ENCODE measurements at regions of chr7 and their contacts with region 1.

Region 1: DNA sequence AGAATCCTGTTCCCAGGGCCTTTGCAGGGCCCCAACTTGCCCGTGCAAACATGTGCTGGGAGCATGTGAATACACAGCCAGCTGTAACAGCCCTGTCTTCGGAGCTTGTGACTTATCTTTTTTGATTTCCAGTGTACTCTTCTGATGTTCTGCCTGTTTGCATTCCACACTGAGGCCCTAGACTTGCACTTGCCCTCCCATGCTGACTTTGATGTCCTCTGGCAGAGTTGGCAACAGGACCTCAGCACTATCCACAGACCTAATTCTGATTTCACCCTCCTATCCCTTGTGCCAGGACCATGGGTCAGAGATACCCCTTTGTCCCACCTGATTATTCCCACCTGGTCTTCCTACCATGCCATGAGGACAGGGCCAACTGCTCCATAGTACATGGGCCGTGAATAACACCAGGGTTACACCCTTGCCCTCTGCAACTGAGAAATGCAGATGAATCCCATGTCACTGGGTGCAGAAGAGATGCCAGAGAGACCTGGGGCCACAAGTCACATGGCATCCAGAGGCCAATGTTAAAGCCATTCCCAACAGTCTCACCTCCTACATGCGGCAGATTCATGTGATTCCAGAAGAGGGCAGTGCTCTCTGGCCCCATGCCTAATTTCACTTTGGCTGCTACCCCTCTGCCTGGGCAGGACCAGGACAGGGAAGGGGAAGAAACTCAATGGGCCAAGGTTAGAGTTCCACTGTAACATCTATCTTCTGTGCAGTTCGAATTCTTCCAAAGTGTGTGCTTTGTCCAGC is 43.0 kb downstream of the SCRN1 start:
- DNase-seq: peak; percentile 44 to 79 (median 76)
- ATAC-seq: peak; percentile 38 to 56
- H3K4me3 ChIP-seq: no peak overlapping the region
- H3K27ac ChIP-seq: no peak overlapping the region
- H3K4me1 ChIP-seq: no peaks in the 10 kb centered on the region
- H3K27me3 ChIP-seq: no peaks in the 10 kb centered on the region

Region 2: GRCh38 chr7:28732071-28732869 is 1214.3 kb before region 1 on chr7:
- intact Hi-C with region 1: no loop called
- DNase-seq: peak; percentile 22 to 72 (median 65)
- ATAC-seq: peak; percentile 70 to 85
- H3K4me3 ChIP-seq: no peak overlapping the region
- H3K27ac ChIP-seq: peak overlapping the region; percentile 37
- H3K4me1 ChIP-seq: peaks cover 6% of the 10 kb centered on the region
- H3K27me3 ChIP-seq: no peaks in the 10 kb centered on the region

Region 3: DNA sequence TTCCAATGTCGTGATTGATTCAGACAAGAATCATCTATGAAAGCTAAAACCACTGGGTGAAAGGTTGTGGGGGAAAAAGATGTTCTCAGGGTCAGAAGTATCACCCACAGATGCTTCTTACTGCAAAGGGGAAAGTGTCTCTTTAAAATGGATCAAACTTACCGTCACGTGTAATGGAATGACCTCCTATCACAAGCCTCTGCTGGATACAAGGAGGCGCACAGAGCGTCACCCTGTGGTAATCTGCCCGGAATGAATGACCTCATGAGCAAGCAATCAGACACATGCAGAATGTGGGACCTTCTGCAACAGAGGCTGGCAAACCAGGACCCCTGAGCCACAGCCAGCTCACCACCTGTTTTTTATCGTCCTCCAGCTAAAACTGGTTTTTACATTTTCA is 107.3 kb before region 1 on chr7:
- intact Hi-C with region 1: no loop called
- DNase-seq: peak; percentile 78 to 86 (median 80)
- ATAC-seq: peak; percentile 88 to 94
- H3K4me3 ChIP-seq: no peak overlapping the region
- H3K27ac ChIP-seq: no peak overlapping the region
- H3K4me1 ChIP-seq: no peaks in the 10 kb centered on the region
- H3K27me3 ChIP-seq: no peaks in the 10 kb centered on the region

Region 4: GRCh38 chr7:30062591-30062990 is 116.0 kb after region 1 on chr7:
- intact Hi-C with region 1: loop called in 1 of 4 experiments (anchors 10 kb)
- DNase-seq: no peak
- ATAC-seq: peak; percentile 70 to 72
- H3K4me3 ChIP-seq: no peak overlapping the region
- H3K27ac ChIP-seq: no peak overlapping the region
- H3K4me1 ChIP-seq: no peaks in the 10 kb centered on the region
- H3K27me3 ChIP-seq: no peaks in the 10 kb centered on the region

Region 5: GRCh38 chr7:30225863-30226613 is 279.4 kb after region 1 on chr7:
- intact Hi-C with region 1: no loop called
- DNase-seq: peak; percentile 55 to 83 (median 82)
- ATAC-seq: peak; percentile 81 to 84
- H3K4me3 ChIP-seq: no peak overlapping the region
- H3K27ac ChIP-seq: peak overlapping the region; percentile 10
- H3K4me1 ChIP-seq: peaks cover 5% of the 10 kb centered on the region
- H3K27me3 ChIP-seq: no peaks in the 10 kb centered on the region